ENCODE measurements at regions of chr3 and their contacts with region 1.

Region 1: DNA sequence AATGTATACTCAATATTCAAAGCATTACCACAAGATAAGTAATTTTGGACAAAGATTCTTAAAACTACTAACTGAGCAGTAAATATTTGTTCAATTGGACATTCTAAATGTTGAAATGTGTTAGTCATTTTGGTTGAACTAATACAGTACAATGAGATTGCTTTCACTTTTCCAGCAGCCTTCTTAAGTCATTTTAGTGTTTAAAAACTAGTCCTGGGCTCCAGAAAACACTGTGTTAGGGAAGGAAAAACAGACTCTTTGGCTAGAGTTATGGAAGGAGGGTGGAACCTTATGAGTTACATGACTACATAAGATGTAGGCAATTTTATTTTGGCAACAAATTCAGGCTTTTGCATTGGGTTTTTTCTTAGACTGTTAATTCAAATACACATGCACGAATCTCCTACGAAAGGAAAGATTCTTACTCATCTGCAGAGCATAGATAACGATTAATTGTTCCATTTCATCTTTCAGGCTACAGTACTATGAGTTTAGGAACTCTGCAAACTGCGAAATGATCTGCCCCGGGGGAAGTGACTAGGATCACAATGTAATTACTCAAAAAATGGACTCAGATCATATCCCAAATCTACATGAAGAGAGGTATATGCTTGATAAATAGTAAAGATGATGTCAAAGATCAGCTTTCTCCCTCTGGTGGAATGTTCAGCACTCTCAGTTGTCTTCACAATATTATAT is 492.8 kb upstream of the MDFIC2 start:
- DNase-seq: peak; percentile 74
- ATAC-seq: peak; percentile 56
- H3K4me3 ChIP-seq: peak overlapping the region; percentile 61
- H3K27ac ChIP-seq: peak overlapping the region; percentile 88
- H3K4me1 ChIP-seq: peaks cover 48% of the 10 kb centered on the region
- H3K27me3 ChIP-seq: no peaks in the 10 kb centered on the region
- CTCF ChIP-seq: peak; percentile 49; the same call in 1 of the 2 replicates

Region 2: GRCh38 chr3:70716832-70717231 is 88.4 kb before region 1 on chr3:
- CTCF ChIA-PET with region 1: interaction called, 6 read pairs
- POLR2A ChIA-PET with region 1: no interaction called
- intact Hi-C with region 1: loop called (anchors 2 kb)
- DNase-seq: peak; percentile 55
- ATAC-seq: peak; percentile 88
- H3K4me3 ChIP-seq: no peak overlapping the region
- H3K27ac ChIP-seq: no peak overlapping the region
- H3K4me1 ChIP-seq: no peaks in the 10 kb centered on the region
- H3K27me3 ChIP-seq: no peaks in the 10 kb centered on the region
- CTCF ChIP-seq: peak; percentile 75

Region 3: DNA sequence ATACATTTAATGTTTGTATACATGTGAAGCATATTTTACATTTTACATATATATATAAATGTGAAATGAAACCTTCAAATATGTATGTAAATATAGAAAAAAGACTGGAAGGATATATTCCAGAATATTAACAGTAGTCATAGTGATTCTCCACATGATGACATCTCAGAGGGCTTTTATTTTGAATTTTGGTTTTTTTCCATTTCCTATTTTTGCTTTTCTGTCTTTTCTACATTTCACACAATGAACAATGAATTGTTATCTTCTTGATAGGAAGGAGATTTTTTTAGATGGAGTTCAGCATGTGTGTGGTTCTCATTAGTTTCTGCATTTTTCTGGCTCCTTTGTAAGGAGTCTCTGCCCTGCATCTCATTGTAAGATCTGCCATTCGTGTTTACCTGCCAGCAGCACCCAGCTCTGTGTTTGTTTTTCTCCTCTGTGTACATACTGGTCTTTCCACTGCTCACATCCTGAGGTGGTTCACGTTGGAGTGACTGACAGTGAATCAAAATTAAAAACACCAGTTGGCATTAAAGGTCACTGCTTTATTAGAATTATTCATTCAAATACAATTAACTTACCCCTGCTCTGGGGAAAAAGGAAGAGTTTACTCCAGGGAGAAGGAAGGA is 67.4 kb before region 1 on chr3:
- CTCF ChIA-PET with region 1: no interaction called
- POLR2A ChIA-PET with region 1: no interaction called
- intact Hi-C with region 1: loop called (anchors 1 kb)
- DNase-seq: peak; percentile 83
- ATAC-seq: peak; percentile 99
- H3K4me3 ChIP-seq: peak overlapping the region; percentile 22; the same call in 1 of the 2 replicates
- H3K27ac ChIP-seq: peak overlapping the region; percentile 85
- H3K4me1 ChIP-seq: peaks cover 19% of the 10 kb centered on the region
- H3K27me3 ChIP-seq: no peaks in the 10 kb centered on the region
- CTCF ChIP-seq: no peak

Region 4: DNA sequence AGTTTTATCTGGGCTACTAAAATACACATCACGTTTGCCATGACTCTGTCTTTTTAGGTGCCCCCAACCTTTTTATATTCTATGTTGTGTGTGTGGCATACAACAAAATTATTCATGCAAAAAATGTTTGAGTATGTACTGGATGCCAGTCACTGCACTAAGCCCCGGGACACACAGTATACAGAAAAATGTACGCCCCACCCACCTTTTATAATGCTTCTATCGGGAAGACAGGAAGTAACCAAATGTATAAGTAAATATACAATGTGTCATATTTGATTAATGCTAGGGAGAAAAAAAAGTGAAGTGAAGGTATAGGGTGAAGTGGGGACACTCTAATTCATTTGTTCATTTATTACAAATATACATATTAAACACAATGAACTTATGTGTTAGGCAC is 10.6 kb after region 1 on chr3:
- CTCF ChIA-PET with region 1: no interaction called
- POLR2A ChIA-PET with region 1: no interaction called
- intact Hi-C with region 1: loop called (anchors 1 kb)
- DNase-seq: peak; percentile 89
- ATAC-seq: peak; percentile 98
- H3K4me3 ChIP-seq: no peak overlapping the region
- H3K27ac ChIP-seq: peak overlapping the region; percentile 31
- H3K4me1 ChIP-seq: peaks cover 32% of the 10 kb centered on the region
- H3K27me3 ChIP-seq: no peaks in the 10 kb centered on the region
- CTCF ChIP-seq: no peak

Region 5: DNA sequence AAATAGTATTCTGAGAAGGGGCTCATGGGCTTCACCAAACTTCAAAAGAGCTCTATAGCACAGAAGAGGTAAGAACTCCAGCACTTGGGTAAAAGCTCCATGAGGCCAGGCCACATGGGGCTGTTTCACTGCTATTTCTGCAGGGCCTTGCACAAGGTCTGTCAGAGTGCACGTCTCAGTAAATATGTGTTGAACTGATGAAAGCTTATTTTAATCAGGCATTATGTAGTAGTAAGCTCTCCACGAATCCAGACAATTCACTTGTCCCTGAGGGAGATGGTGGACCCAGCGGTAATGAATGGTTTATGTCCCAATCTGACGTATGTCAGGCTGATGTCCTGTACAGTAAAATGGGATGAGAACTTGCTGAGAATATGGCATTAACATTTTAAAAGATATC is 26.8 kb after region 1 on chr3:
- CTCF ChIA-PET with region 1: no interaction called
- POLR2A ChIA-PET with region 1: no interaction called
- intact Hi-C with region 1: no loop called
- DNase-seq: no peak
- ATAC-seq: no peak
- H3K4me3 ChIP-seq: no peak overlapping the region
- H3K27ac ChIP-seq: no peak overlapping the region
- H3K4me1 ChIP-seq: peaks cover 11% of the 10 kb centered on the region; the same call in 1 of the 2 replicates
- H3K27me3 ChIP-seq: no peaks in the 10 kb centered on the region
- CTCF ChIP-seq: no peak

Region 6: DNA sequence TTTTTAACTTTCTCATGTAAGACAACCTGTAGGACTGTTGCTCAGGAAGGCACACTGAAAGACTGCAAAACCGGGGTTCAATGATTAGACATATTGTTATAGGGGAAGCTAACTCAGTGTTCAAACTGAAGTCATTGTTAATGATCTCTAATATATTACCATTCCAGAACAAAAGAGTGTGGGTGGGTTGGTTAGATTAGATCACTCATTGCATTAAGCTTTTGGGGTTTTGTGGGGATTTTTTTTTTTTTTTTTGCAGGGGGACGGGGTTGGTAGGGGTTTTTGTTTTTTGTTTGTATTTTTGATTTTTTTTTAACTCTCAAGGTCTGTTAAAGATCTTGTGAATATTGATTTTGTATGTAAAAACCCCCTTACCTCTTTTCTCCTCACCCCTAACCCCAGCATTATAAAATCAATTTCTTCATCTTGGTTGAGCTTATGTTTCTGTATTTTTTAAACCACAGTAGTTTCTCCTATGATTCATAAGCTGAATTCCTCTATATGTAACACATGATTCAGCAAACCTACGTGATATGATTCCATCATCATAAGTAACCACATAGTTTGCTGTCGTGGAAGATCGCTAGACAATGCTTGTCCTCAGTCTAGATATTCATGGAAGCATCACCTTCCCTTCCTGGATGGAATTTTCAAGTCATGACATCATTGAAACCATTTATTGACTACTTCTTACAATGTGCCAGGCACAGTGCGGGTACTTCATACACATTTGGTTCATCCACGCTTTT is 51.4 kb after region 1 on chr3:
- CTCF ChIA-PET with region 1: no interaction called
- POLR2A ChIA-PET with region 1: no interaction called
- intact Hi-C with region 1: no loop called
- DNase-seq: peak; percentile 83
- ATAC-seq: peak; percentile 72
- H3K4me3 ChIP-seq: no peak overlapping the region
- H3K27ac ChIP-seq: peak overlapping the region; percentile 81
- H3K4me1 ChIP-seq: peaks cover 37% of the 10 kb centered on the region
- H3K27me3 ChIP-seq: no peaks in the 10 kb centered on the region
- CTCF ChIP-seq: no peak

Region 7: DNA sequence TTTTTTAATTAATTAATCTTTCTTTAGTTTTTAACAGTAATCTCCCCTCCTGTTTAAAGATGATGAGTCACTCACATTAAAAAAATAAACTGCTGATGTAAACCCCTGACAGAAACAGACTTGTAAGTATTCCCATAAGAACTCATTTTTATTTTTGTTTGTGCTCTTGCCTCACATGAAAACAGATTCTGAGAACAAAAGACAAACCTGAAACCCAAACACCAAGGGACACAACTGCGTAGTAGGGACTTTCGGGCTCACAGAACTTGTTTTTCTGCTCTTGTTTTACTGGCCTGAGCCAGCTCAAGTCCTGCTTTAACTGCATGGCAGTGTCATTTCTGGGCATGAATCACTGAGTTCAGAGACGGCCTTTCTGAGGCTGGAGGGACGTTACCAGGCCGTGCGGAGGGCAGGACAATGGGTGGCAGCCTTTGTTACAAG is 177.5 kb after region 1 on chr3:
- CTCF ChIA-PET with region 1: no interaction called
- POLR2A ChIA-PET with region 1: no interaction called
- intact Hi-C with region 1: loop called (anchors 5 kb)
- DNase-seq: peak; percentile 97
- ATAC-seq: peak; percentile 98
- H3K4me3 ChIP-seq: peak overlapping the region; percentile 55
- H3K27ac ChIP-seq: peak overlapping the region; percentile 92
- H3K4me1 ChIP-seq: peaks cover 29% of the 10 kb centered on the region
- H3K27me3 ChIP-seq: no peaks in the 10 kb centered on the region
- CTCF ChIP-seq: no peak